SK-N-SH (cell line): ENCODE measurements at regions of chrX and their contacts with region 1.

Region 1: DNA sequence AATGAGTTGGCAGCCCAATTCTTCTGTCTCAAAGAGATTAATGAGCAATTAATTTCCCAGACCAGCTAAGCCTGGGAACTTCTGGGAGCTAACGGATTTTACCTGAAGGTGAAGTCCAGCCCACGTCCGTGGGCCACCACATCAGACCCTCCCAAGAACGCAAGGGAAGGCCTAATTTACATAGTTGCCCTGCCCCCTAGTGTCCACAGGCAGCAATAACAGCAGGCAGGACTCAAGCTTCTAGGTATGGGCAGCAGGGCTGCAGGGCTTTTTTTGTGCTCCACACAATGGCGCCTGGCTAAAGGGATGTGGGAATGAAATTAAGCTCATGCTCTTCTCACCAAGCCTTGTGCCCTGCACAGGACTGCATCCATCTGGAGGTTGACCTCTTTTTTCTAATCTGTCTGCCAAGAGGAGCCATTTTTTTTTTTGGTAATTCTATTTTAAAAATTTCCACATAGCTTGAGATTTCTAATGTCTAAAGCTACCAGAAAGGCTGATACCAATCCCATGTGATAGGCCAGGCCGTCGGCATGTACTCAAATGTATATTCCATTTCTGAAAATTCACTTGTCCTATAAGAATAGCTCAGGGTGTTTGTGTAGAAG is 111.9 kb upstream of the TMEM164 start:
- DNase-seq: peak; percentile 65
- H3K4me3 ChIP-seq: peak overlapping the region in 1 of 2 experiments; percentile 30; a peak in 1 of 4 replicates
- H3K27ac ChIP-seq: no peak overlapping the region
- H3K4me1 ChIP-seq: no peaks in the 10 kb centered on the region; a peak in 1 of 4 replicates
- H3K27me3 ChIP-seq: no peaks in the 10 kb centered on the region
- CTCF ChIP-seq: peak; percentile 90
- EP300 ChIP-seq: no peak
- RAD21 ChIP-seq: peak; percentile 59

Region 2: DNA sequence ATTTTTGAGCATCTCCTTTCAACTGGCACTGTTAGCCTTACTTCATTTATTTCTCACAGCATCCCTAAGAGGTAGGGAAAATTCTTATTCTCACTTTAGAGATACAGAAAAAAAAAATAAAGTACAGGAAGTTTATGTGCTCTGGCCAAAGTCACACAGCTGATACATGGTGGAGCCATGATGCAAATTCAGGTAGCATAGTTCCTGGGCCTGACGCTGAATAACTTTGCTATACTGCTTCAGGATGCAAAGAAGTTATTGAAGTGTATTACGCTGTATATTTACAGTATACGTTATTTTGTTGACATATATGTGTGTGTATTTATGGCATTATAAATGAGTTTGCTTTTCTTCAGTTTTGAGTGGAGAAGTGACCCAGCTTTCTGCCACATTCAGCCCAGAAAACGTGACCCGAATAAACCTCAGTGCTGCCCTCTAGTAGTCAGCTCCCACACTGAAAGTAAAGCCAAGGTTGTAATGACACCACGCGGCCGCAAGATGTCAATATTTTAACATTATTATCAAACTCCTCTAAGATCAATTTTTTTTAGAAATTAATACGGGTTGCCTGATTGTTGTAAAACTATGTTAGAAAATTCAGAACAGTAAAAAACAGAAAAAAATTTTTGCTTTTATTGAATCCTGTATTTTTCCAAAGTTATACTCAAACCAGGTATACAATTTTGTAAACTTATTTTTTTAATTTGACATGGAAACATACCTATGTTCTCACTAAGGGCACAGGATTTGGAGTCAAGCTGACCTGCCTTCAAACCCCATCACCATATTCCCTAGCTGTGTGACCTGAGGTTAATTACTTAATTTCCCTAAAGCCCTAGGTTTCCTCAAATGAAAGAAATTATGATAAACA is 405.3 kb before region 1 on chrX:
- CTCF ChIA-PET with region 1: interaction called, 10 read pairs
- POLR2A ChIA-PET with region 1: no interaction called
- DNase-seq: peak; percentile 38
- H3K4me3 ChIP-seq: no peak overlapping the region; a peak in 1 of 4 replicates
- H3K27ac ChIP-seq: no peak overlapping the region
- H3K4me1 ChIP-seq: no peaks in the 10 kb centered on the region
- H3K27me3 ChIP-seq: peaks cover 11% of the 10 kb centered on the region; the same call in 1 of the 2 replicates
- CTCF ChIP-seq: peak; percentile 99
- EP300 ChIP-seq: no peak
- RAD21 ChIP-seq: peak; percentile 81

Region 3: GRCh38 chrX:109709129-109709631 is 181.8 kb before region 1 on chrX:
- CTCF ChIA-PET with region 1: interaction called, 24 read pairs
- POLR2A ChIA-PET with region 1: no interaction called
- DNase-seq: no peak
- H3K4me3 ChIP-seq: no peak overlapping the region
- H3K27ac ChIP-seq: peak overlapping the region in 1 of 2 experiments; percentile 22; a peak in 1 of 4 replicates
- H3K4me1 ChIP-seq: peaks cover 0 to 13% of the 10 kb centered on the region in 2 experiments; a peak in 1 of 4 replicates
- H3K27me3 ChIP-seq: peaks cover 4% of the 10 kb centered on the region; the same call in 1 of the 2 replicates
- CTCF ChIP-seq: no peak
- EP300 ChIP-seq: no peak
- RAD21 ChIP-seq: no peak

Region 4: DNA sequence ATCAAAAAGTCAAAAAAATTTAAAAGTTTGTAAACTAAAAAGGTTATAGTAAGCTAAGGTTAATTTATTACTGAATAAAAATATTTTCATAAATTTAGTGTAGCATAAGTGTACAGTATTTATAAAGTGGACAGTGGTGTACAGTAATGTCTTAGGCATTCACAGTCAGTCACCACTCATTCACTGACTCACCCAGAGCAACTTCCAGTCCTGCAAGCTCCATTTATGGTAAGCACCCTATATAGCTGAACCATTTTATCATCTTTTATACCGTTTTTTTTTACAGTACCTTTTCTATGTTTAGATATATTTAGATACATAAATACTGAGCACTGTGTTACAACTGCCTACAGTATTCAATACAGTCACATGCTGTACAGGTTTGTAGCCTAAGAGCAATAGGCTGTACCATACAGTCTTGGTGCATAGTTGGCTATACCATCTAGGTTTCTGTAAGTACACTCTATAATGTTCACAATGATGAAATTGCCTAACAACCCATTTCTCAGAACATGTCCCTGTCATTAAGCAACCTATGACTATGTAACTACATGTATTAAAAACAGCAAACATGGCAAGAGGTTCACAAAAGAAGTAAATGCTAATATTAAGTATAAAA is 176.6 kb before region 1 on chrX:
- CTCF ChIA-PET with region 1: interaction called, 24 read pairs
- POLR2A ChIA-PET with region 1: no interaction called
- DNase-seq: no peak
- H3K4me3 ChIP-seq: no peak overlapping the region
- H3K27ac ChIP-seq: peak overlapping the region in 1 of 2 experiments; percentile 73; a peak in 2 of 4 replicates
- H3K4me1 ChIP-seq: peaks cover 0 to 13% of the 10 kb centered on the region in 2 experiments; a peak in 1 of 4 replicates
- H3K27me3 ChIP-seq: peaks cover 4% of the 10 kb centered on the region; the same call in 1 of the 2 replicates
- CTCF ChIP-seq: no peak
- EP300 ChIP-seq: peak in 1 of 2 experiments; percentile 44; a peak in 1 of 4 replicates
- RAD21 ChIP-seq: no peak

Region 5: DNA sequence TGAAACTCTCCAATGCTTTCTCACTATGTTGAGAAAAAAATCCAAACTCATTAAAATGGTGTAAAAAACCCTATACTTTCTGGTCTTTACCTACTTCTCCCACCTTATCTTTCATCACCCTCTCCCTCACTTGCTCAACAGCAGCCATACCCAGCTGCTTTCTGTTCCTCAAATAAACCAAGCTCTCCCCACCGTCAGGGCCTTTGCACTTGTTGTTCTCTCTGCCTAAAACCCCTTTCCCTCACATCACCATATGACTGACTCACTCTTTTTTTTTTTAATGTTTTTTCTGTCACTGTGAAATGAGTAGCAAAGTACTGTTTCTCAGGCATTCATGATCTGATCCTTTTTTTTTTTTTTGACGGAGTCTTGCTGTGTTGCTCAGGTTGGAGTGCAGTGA is 10.4 kb before region 1 on chrX:
- CTCF ChIA-PET with region 1: interaction called, 24 read pairs
- POLR2A ChIA-PET with region 1: no interaction called
- DNase-seq: no peak
- H3K4me3 ChIP-seq: no peak overlapping the region
- H3K27ac ChIP-seq: no peak overlapping the region
- H3K4me1 ChIP-seq: no peaks in the 10 kb centered on the region
- H3K27me3 ChIP-seq: no peaks in the 10 kb centered on the region; the same call in 1 of the 2 replicates
- CTCF ChIP-seq: no peak
- EP300 ChIP-seq: no peak
- RAD21 ChIP-seq: no peak

Region 6: DNA sequence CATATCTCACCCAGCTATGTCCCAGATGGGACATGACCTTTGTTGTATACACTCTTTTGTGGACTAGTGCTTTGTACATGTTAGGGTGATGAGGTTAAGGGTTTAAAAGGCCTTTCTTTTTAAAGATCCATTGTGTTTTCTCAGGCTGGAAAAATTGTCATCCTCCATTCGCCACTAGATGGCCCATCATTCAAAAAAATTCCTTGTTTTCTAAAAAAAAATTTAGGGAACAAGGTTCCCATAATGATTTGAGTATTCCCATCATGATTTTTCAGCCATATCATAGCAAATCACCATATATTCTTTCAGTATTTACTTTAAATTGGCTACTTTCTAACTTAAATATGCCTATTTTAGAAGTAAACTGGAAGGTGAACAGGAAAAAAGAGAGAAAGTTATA is 20.0 kb after region 1 on chrX:
- CTCF ChIA-PET with region 1: interaction called, 12 read pairs
- POLR2A ChIA-PET with region 1: no interaction called
- DNase-seq: peak; percentile 21
- H3K4me3 ChIP-seq: no peak overlapping the region
- H3K27ac ChIP-seq: no peak overlapping the region
- H3K4me1 ChIP-seq: no peaks in the 10 kb centered on the region
- H3K27me3 ChIP-seq: no peaks in the 10 kb centered on the region; the same call in 1 of the 2 replicates
- CTCF ChIP-seq: peak; percentile 69
- EP300 ChIP-seq: no peak
- RAD21 ChIP-seq: peak; percentile 65

Region 7: GRCh38 chrX:110180176-110180927 is 289.4 kb after region 1 on chrX:
- CTCF ChIA-PET with region 1: no interaction called
- POLR2A ChIA-PET with region 1: no interaction called
- DNase-seq: no peak
- H3K4me3 ChIP-seq: no peak overlapping the region
- H3K27ac ChIP-seq: peak overlapping the region in 1 of 2 experiments; percentile 59; a peak in 2 of 4 replicates
- H3K4me1 ChIP-seq: no peaks in the 10 kb centered on the region; a peak in 1 of 4 replicates
- H3K27me3 ChIP-seq: no peaks in the 10 kb centered on the region
- CTCF ChIP-seq: no peak
- EP300 ChIP-seq: no peak
- RAD21 ChIP-seq: no peak